ENCODE measurements at regions of chr3 and their contacts with region 1.

Region 1: GRCh38 chr3:178140531-178141304 is 395.5 kb upstream of the KCNMB2 start:
- DNase-seq: no peak
- H3K4me3 ChIP-seq: no peak overlapping the region
- H3K27ac ChIP-seq: no peak overlapping the region
- H3K4me1 ChIP-seq: no peaks in the 10 kb centered on the region
- H3K27me3 ChIP-seq: no peaks in the 10 kb centered on the region
- CTCF ChIP-seq: no peak
- POLR2A ChIP-seq: no peak

Region 2: GRCh38 chr3:176780766-176781165 is 1360.0 kb before region 1 on chr3:
- intact Hi-C with region 1: loop called (anchors 5 kb)
- DNase-seq: no peak
- H3K4me3 ChIP-seq: no peak overlapping the region
- H3K27ac ChIP-seq: no peak overlapping the region
- H3K4me1 ChIP-seq: no peaks in the 10 kb centered on the region
- H3K27me3 ChIP-seq: no peaks in the 10 kb centered on the region
- CTCF ChIP-seq: no peak
- POLR2A ChIP-seq: no peak

Region 3: GRCh38 chr3:178236555-178237277 is 96.0 kb after region 1 on chr3:
- intact Hi-C with region 1: no loop called
- DNase-seq: no peak
- H3K4me3 ChIP-seq: no peak overlapping the region
- H3K27ac ChIP-seq: no peak overlapping the region
- H3K4me1 ChIP-seq: no peaks in the 10 kb centered on the region
- H3K27me3 ChIP-seq: no peaks in the 10 kb centered on the region
- CTCF ChIP-seq: no peak
- POLR2A ChIP-seq: no peak

Measured in vagina (tissue), 2 donors.